Naive thymus-derived CD4-positive, alpha-beta T cell (primary cell): ENCODE measurements at regions of chr15 and their contacts with region 1.

Region 1: DNA sequence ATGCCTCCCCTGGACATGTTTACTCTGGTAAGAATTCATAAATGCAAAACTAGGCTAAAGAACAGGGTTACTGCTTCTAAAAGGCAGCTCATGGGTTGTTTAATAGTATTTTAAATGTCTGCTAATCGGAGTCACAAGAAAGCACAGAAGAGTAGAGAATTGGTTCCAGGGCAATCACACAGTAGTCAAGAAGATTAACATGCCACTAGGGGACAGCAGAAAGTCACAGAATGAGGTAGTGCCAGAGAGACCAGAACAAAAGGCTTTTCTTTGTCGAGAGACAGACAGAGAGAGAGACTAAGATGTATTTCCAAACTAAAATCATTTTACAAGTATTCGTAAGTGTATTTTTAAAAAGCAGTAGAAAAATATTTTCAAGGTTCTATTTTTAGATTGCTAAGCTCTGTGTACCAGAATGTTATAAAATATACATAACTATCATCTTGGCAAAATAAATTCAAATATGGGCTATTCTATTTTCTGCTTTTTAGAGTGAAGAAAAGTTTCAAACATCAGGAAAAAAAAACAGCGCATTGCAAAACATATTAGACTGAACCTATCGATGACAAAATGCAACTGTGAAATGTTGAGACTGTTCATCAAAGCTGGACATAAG is 78.3 kb upstream of the CDIN1 start:
- DNase-seq: peak in 5 of 9 donors; percentile 2 to 16 (median 10)
- ATAC-seq: no peak
- H3K4me3 ChIP-seq: no peak overlapping the region
- H3K4me3 Mint-ChIP-seq: no peak overlapping the region
- H3K27ac ChIP-seq: no peak overlapping the region
- H3K27ac Mint-ChIP-seq: no peak overlapping the region
- H3K4me1 ChIP-seq: no peaks in the 10 kb centered on the region
- H3K4me1 Mint-ChIP-seq: no peaks in the 10 kb centered on the region
- H3K27me3 ChIP-seq: peaks cover 0 to 4% of the 10 kb centered on the region in 2 donors
- H3K27me3 Mint-ChIP-seq: peaks cover 6 to 21% (median 16%) of the 10 kb centered on the region in 5 donors

Region 2: GRCh38 chr15:37880009-37880834 is 1379.1 kb after region 1 on chr15:
- CTCF ChIA-PET with region 1: no interaction called
- POLR2A ChIA-PET with region 1: no interaction called
- intact Hi-C with region 1: loop called in 1 of 2 experiments (anchors 5 kb)
- DNase-seq: no peak
- ATAC-seq: no peak
- H3K4me3 ChIP-seq: no peak overlapping the region
- H3K4me3 Mint-ChIP-seq: no peak overlapping the region
- H3K27ac ChIP-seq: no peak overlapping the region
- H3K27ac Mint-ChIP-seq: no peak overlapping the region
- H3K4me1 ChIP-seq: no peaks in the 10 kb centered on the region
- H3K4me1 Mint-ChIP-seq: no peaks in the 10 kb centered on the region
- H3K27me3 ChIP-seq: no peaks in the 10 kb centered on the region
- H3K27me3 Mint-ChIP-seq: peaks cover 0 to 38% (median 15%) of the 10 kb centered on the region in 5 donors

Region 3: GRCh38 chr15:37891766-37892368 is 1390.7 kb after region 1 on chr15:
- CTCF ChIA-PET with region 1: no interaction called
- POLR2A ChIA-PET with region 1: no interaction called
- intact Hi-C with region 1: loop called in 1 of 2 experiments (anchors 10 kb)
- DNase-seq: peak in 1 of 9 donors; percentile 4
- ATAC-seq: no peak
- H3K4me3 ChIP-seq: no peak overlapping the region
- H3K4me3 Mint-ChIP-seq: no peak overlapping the region
- H3K27ac ChIP-seq: no peak overlapping the region
- H3K27ac Mint-ChIP-seq: no peak overlapping the region
- H3K4me1 ChIP-seq: no peaks in the 10 kb centered on the region
- H3K4me1 Mint-ChIP-seq: peaks cover 0 to 2% (median 0%) of the 10 kb centered on the region in 7 donors
- H3K27me3 ChIP-seq: no peaks in the 10 kb centered on the region
- H3K27me3 Mint-ChIP-seq: peaks cover 0 to 29% (median 14%) of the 10 kb centered on the region in 5 donors